Vagina (tissue), 2 donors: ENCODE measurements at regions of chr2 and their contacts with region 1.

Region 1: DNA sequence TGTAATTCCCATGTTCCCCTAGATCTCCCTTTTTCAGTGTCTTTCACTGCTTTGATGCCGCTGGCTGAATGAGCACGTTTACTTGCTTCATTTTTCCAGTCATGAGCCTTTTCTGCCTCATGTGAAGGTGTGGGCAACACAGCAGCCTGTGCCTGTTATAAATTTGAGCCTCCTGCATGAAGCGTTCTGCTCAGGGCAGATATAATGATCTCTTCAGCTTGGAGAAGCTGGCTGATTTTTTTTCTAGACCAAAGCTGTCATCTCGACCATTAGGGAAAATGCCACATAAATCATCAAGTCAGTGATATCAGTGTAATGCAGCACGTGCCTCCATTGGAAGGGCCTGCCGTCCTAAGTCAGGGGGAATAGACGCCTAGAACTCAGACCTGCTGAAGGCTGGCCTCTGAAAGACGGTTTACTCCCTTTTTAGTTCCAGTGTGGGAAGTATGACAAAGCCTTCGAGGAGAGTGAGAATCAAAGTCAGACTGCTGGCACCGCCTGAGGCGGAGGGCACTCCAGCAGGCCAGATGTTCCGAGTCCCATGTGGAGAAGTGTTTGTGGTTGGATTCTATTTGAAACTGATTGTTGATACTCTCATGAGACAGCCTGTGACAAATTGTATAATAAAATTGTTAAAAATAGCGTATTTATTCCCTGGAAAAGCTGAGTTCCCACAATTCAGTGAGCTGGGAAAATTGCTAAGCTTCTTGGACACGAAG is 196.5 kb downstream of the MYO1B start:
- DNase-seq: no peak
- H3K4me3 ChIP-seq: no peak overlapping the region
- H3K27ac ChIP-seq: peak overlapping the region; percentile 18
- H3K4me1 ChIP-seq: no peaks in the 10 kb centered on the region
- H3K27me3 ChIP-seq: no peaks in the 10 kb centered on the region
- CTCF ChIP-seq: no peak
- POLR2A ChIP-seq: no peak

Region 2: DNA sequence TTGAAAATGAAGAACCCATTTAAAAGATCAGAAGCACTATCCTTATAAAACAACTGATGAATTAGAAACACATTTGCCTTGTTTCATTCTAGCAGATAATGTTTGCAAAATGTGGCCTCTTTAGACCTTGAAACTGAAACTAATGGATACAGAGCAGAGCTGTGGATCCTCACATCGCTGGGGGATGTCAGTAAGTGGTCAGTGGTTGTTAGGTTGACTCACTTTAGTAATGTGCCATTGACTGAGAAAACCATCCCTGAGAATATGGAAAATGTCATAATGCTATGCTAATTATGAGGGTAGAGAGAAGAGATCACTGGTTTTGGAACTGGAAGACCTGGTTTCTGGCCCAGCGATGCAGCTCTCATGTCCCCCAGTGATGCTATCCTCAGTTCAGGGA is 19.7 kb before region 1 on chr2:
- intact Hi-C with region 1: loop called (anchors 2 kb)
- DNase-seq: no peak
- H3K4me3 ChIP-seq: no peak overlapping the region
- H3K27ac ChIP-seq: no peak overlapping the region
- H3K4me1 ChIP-seq: no peaks in the 10 kb centered on the region
- H3K27me3 ChIP-seq: no peaks in the 10 kb centered on the region
- CTCF ChIP-seq: no peak
- POLR2A ChIP-seq: no peak